Motor neuron (in vitro differentiated cells): ENCODE measurements at regions of chr1 and their contacts with region 1.

Region 1: GRCh38 chr1:27858072-27858958 is 14.0 kb upstream of the THEMIS2 start:
- ATAC-seq: peak; percentile 61 to 97 (median 88)
- H3K4me3 ChIP-seq: no peak overlapping the region
- H3K27ac ChIP-seq: no peak overlapping the region
- H3K4me1 ChIP-seq: peaks cover under 1 to 4% of the 10 kb centered on the region in 2 donors

Region 2: DNA sequence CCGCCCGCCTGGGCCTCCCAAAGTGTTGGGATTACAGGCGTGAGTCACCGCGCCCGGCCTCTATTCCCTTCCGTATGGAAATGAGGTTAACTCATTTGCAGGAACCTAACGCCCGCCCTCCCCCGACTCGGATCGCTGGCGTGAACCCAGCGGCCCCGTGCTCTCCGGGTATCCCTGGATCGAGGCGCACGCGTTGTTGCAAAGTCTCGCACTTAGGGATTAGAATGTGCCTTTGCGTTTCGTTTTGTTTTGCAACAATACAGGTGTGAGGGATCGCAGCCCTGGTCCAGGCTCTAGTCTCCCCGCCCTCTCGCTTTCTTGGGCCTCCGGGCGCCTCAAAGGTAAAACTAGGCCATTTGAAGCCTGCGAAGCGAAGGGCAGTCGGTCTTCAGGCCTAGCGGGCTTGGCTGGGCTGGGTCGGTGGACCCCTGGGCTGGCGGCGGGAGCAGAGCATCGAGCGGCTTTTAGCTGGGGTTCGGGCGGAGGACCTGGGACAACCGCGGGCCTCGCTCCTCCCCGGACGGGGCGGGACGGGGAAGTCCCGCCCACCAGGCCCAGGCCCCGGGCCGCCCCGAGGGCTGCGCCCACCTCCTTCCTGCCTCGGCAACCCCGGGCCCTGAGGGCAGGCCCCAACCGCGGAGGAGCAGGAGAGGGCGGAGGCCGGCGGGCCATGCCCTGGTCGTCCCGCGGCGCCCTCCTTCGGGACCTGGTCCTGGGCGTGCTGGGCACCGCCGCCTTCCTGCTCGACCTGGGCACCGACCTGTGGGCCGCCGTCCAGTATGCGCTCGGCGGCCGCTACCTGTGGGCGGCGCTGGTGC is 101.3 kb after region 1 on chr1 and contains the start of gene XKR8:
- in situ Hi-C with region 1: loop called in 1 of 9 experiments (anchors 25 kb)
- ATAC-seq: peak; percentile 57 to 93 (median 86)
- H3K4me3 ChIP-seq: peak within 1 kb of the TSS in 4 of 5 donors; percentile 15 to 36 (median 23)
- H3K27ac ChIP-seq: no peak within 1 kb of the TSS
- H3K4me1 ChIP-seq: peaks cover 0 to 4% of the 10 kb centered on the region in 2 donors
- total RNA-seq, gene XKR8: 0.27 to 4.7 (median 1.6) TPM

Region 3: DNA sequence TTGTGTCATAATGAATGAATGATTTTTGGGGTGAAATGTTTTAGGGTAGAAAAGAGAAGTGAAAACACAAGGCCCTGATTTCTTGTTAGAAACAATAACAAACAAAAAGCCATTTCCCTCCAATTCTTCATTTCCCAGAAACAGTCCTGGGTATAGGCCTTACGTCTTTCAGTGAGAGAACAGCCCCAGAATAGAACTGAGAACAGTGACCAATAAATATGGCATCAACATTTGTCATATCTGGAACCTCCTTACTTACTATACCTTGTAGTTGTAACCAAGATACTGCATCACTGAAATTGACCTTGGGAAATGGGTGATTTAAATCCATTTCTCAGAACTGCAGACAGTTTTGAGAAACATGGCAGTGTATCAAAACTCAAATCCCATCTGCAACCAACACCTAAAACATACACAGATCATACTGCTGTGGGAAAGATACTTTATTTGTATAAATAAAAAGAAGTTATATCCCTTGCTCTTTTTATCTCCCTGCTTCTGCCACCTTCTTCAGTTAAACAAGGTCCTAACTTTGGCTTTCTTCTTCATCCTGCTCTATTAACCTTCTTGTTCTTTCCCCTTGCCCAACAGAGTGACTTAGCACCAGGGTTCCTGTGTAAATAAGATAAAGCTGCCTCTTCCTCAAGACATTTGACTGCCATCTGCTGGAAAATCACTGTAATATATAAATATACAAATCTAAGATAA is 121.0 kb after region 1 on chr1:
- in situ Hi-C with region 1: loop called in 2 of 9 experiments (anchors 10 to 25 kb)
- ATAC-seq: peak in 4 of 8 experiments; percentile 37 to 82 (median 72)
- H3K4me3 ChIP-seq: no peak overlapping the region
- H3K27ac ChIP-seq: no peak overlapping the region
- H3K4me1 ChIP-seq: no peaks in the 10 kb centered on the region

Region 4: DNA sequence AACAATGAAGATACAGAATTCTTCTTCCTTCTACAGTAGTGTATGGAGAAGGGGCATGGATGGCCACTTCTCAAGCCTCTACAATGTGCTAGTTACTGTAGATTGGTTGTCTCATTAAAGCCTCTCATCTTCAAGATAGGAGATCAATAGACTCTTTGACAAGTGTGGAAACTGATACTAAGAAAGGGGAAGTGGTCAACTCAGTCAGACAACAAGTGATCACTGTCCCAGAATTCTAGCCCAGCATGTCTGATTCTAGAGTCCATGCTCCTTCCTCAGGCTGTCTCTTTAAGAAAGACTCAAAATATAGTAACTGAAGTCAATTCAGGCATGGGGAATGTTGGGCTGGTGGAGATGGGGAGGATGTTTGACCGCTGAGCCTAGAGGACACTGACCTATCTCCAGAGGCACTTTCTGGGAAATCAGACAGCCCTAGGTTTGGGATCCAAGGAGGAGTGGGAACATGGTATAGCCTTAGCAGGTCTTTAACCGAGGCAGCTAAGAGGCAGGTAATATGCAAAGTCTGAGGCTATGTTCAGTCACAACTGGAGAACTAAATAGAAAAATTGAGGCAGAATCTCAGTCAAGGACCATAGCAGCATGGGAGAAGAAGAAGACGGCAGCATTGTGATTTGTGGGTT is 269.4 kb after region 1 on chr1:
- in situ Hi-C with region 1: no loop called
- ATAC-seq: no peak
- H3K4me3 ChIP-seq: no peak overlapping the region
- H3K27ac ChIP-seq: no peak overlapping the region
- H3K4me1 ChIP-seq: peaks cover 0 to 4% of the 10 kb centered on the region in 2 donors